ENCODE measurements at regions of chr3 and their contacts with region 1.

Region 1: DNA sequence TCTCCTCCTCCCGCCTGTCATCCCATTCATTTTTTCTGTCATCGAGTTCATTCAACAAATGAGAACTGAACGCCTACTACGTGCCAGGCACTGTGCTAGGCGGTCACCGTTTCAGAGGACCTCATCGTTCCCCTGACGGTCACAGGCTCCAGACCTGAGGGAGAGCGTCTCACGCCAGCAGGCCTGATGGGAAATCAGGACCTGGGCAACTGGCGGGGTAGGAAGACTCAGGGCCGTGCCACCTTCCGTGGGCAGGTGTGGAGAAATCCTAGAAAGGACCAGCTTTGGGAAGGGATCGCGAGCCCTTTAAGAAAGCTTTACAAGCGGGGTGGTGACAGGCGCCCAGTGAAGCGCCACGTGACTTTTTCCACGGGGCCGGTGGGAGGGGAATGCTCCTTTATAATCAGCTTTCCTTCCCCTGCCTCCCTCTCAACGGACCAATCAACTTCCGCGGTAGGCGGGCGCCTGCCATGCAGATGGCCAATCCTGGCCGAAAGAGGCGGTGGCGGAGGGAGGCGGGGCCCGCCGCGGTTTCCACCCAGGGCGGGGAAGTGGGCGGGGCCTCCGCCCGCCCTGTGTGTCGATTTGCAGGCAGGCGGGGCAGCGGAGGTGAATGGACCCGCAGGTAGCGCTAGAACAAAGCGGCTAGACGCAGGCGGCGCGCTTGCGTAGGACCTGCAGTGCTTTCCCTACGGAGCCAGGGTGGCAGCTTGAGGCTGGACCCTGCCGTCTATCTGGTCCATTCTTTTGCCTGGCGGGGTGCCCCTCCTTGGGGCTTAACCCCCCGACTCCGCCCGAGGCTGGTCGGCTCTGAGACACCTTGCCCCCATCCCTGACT is 816 bp upstream of the DUSP7 start:
- DNase-seq: peak; percentile 99 to 100 (median 100)

Region 2: GRCh38 chr3:52001443-52001974 is 55.7 kb before region 1 on chr3:
- intact Hi-C with region 1: loop called (anchors 2 kb)
- DNase-seq: peak; percentile 62 to 97 (median 82)

Region 3: GRCh38 chr3:52090131-52090932 is 33.1 kb after region 1 on chr3:
- intact Hi-C with region 1: no loop called
- DNase-seq: peak in 7 of 10 donors; percentile 15 to 92 (median 60)

Region 4: DNA sequence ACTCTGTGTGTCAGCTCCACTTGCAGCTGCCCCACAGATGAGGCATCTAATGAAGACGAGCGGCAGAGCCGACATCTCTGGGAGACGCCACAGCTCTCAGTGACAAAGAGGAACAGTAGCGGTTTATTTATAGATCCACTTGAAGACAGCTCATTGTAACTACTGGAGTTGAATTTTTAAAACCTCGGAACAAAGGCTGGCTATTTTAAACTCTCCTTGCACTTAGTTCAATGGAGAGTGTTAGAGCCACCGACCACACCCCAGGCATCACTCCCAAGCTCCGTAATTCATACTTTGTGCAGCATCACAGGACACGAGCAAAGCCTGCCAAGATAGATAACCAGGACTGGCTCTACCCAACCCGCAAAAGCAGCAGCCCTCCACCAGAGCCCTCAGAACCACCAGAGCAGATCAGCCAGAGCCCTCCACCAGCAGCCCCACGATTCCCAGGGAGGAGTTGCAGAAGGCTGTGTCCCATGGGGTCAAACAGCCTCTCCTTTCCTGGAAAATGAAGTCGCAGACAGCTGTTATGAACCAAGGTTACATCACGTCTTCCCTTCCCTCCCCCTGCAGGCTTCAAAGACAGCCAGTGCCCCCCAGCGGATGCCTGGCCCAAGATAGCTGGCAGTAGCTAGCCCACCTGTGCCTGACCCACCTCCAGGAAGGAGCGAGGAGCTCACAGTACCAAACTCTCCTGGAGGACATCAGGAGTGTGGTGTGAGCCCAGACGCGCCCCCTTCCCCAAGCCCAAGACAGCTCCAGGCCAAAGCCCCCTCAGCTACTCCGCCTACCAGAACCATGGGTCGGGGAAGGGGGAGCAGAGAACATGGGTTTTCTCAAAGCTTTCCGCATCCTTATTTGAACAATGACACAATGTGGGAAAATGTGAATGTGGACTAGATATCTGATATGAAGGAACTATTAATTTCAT is 51.4 kb after region 1 on chr3:
- intact Hi-C with region 1: loop called (anchors 5 kb)
- DNase-seq: peak in 8 of 10 donors; percentile 51 to 94 (median 66)

Region 5: DNA sequence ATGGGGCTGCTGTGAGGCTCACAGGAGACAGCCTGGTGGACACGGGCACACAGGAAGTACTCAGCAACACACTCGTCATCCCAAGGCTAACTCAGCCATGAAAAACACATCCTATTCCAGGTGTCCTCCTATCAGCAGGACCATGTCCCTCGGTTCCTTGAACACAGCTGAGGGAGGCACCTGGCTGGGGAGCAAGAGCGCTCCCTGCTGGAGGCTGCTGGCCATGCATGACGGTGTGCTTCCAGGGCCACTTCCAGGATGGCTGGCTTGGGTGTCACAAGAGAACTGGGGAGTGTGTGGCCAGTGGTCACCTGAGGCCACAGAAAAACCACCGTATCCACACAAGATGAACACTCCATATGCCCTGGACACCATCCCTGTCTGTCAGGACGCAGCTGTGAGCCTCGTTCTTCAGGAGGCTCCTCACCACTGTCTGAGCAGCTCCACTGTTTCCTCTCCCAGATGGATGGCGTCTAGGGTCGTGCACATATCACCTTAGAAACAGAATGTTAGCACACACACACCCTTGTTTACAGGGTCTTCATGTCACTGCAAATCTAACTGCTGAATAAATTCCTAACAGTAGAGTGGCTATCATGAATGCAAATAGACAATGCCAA is 66.0 kb after region 1 on chr3:
- intact Hi-C with region 1: loop called (anchors 2 kb)
- DNase-seq: peak; percentile 67 to 98 (median 83)

Region 6: GRCh38 chr3:52144034-52144795 is 87.0 kb after region 1 on chr3:
- intact Hi-C with region 1: loop called (anchors 5 kb)
- DNase-seq: peak; percentile 71 to 97 (median 88)

Measured in posterior cingulate gyrus (tissue), 11 donors.